ENCODE measurements at regions of chr6 and their contacts with region 1.

Region 1: DNA sequence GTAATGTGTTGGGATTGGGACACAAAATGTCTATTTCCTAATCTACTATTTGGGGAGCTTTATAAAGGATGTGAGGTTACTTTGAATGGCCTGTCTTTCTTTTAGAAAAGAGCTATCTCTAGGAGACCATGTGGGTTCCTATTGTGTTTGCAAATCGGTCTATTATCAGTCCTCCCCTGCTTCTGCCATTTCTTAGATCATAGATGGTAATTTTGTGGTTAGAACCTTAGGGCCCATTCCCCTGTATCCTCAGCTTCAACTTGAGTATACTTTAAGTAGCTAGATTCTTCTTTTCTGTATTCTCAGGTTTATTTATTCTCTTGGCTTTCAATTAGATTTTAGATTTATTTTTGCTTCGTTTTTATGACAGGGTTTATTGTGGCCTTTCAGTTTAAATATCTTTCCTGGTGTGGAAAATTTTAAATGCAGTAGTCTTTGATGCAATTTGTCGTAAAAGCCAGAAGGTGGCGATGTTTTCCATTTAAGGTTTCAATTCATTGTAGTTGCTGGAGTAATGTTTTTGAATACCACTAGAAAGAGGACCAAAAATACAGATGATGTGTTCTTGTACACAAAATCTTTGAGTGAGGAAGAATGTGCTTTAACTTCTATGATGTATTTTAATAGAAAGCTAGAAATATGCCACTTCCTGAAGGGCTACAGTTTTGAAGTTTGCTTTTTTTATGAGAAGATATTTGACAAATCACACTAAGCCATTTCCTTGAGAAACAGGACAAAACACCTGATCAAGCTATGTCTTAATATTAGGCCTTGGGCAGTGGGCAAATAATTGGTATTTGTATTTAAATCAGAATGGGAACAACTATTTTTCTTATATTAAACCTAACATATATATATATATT is 20.3 kb downstream of the TBPL1 start:
- DNase-seq: no peak
- ATAC-seq: peak; percentile 79
- H3K4me3 ChIP-seq: no peak overlapping the region
- H3K27ac ChIP-seq: no peak overlapping the region
- H3K4me1 ChIP-seq: peaks cover 4 to 9% of the 10 kb centered on the region in 2 donors
- H3K27me3 ChIP-seq: no peaks in the 10 kb centered on the region

Region 2: DNA sequence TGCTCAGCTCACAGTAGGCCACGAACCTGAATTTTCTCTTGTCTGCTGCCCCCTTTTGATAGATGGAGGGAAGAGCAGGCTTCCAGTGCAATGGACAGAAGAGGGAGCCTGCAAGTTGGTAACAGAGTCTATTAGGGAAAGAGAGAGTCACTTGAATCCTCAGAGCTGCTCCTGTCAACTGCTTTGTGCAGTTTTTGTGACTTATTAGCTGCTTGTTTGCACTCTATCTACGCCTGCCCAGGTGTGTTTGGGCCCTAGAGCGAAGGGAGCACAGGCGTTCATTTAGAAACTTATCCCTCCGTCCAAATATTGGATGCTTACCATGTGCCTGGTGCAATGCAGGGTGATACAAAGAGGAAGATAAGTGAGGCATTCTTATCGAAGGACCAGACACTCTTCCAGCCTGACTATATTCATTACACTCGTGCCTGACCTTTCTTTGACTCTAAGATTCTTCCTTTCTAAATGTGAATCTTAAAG is 90.7 kb after region 1 on chr6:
- intact Hi-C with region 1: loop called (anchors 1 kb)
- DNase-seq: peak in 1 of 2 donors; percentile 62
- ATAC-seq: peak; percentile 88
- H3K4me3 ChIP-seq: no peak overlapping the region
- H3K27ac ChIP-seq: no peak overlapping the region
- H3K4me1 ChIP-seq: peaks cover 0 to 15% of the 10 kb centered on the region in 2 donors
- H3K27me3 ChIP-seq: no peaks in the 10 kb centered on the region

Measured in aorta (tissue), 5 donors.